CD4-positive, alpha-beta memory T cell (primary cell): ENCODE measurements at regions of chr2 and their contacts with region 1.

Region 1: DNA sequence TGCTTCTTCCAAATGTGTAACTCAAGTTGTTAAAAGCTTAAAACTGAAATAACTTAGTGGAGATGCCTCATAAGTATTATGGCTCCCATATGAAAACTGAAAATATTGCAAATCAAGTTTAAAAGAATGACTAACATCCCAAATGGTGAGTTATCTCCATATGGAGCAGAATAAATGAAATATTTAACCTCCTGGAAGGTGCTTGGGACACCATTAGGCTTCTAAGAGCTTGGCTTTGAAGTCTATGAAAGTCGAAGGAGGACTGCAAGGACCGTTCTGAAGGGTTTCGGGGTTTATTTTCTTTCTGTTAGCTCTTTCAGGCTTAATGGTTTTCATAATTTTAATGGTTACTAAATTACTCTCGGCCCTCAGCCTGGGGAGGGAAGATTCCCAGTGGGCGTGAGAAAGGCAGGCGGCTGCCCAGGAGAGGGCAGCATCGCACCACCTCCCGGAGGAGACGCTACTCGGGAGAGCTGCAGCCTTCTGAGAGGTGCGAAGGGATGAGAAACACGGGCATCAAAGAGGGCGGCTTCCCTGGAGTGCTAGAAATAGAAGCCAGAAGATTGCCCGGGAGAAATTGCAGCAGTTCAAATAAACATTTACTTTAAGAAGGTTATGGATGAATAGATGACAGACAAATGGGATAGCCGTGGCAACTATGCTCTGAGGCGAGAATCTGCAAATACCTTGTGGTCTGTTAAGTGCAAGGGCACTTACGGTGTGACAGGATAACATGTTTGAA is 43.1 kb downstream of the MAP3K19 start:
- DNase-seq: peak; percentile 48 to 67 (median 62)
- H3K4me3 ChIP-seq: no peak overlapping the region
- H3K4me3 Mint-ChIP-seq: peak overlapping the region in 3 of 8 donors; percentile 8 to 20 (median 17)
- H3K27ac ChIP-seq: no peak overlapping the region
- H3K27ac Mint-ChIP-seq: peak overlapping the region in 1 of 7 donors; percentile 52
- H3K4me1 ChIP-seq: no peaks in the 10 kb centered on the region
- H3K4me1 Mint-ChIP-seq: peaks cover 2 to 6% (median 5%) of the 10 kb centered on the region in 4 donors
- H3K27me3 ChIP-seq: no peaks in the 10 kb centered on the region
- H3K27me3 Mint-ChIP-seq: peaks cover 8 to 20% of the 10 kb centered on the region in 2 donors

Region 2: GRCh38 chr2:134988994-134989605 is 15.1 kb before region 1 on chr2:
- CTCF ChIA-PET with region 1: interaction called, 19 read pairs
- POLR2A ChIA-PET with region 1: no interaction called
- intact Hi-C with region 1: no loop called
- DNase-seq: peak in 4 of 5 donors; percentile 11 to 22 (median 14)
- H3K4me3 ChIP-seq: no peak overlapping the region
- H3K4me3 Mint-ChIP-seq: no peak overlapping the region
- H3K27ac ChIP-seq: no peak overlapping the region
- H3K27ac Mint-ChIP-seq: no peak overlapping the region
- H3K4me1 ChIP-seq: no peaks in the 10 kb centered on the region
- H3K4me1 Mint-ChIP-seq: no peaks in the 10 kb centered on the region
- H3K27me3 ChIP-seq: peaks cover 4% of the 10 kb centered on the region
- H3K27me3 Mint-ChIP-seq: peaks cover 0 to 5% of the 10 kb centered on the region in 2 donors

Region 3: DNA sequence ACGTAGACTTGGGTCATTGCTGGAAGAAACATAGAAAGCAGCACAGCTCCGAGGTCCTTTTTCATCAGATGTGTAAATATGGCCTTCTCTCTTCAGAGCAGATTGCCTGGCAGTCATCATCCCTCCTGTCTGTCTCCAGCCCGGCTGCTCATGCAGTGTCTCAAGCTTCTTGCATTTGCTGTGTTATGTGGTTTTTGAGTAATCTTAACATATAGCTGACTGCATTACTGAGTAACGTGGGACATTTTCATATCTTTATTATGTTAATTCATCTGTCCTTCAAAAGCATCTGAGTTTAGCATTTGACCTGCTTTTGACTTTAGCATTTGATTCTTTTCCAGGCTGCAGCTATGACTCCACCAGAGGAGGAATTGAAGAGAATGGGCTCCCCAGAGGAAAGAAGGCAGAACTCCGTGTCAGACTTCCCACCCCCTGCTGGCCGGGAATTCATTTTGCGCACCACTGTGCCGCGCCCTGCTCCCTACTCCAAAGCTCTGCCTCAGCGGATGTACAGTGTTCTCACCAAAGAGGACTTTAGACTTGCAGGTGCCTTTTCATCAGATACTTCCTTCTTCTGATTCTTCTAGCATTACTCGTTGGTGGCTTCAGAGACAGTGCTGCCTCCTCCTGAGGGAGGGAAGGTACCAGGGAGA is 164.2 kb after region 1 on chr2:
- CTCF ChIA-PET with region 1: interaction called, 8 read pairs
- POLR2A ChIA-PET with region 1: no interaction called
- intact Hi-C with region 1: loop called (anchors 5 kb)
- DNase-seq: no peak
- H3K4me3 ChIP-seq: no peak overlapping the region
- H3K4me3 Mint-ChIP-seq: no peak overlapping the region
- H3K27ac ChIP-seq: no peak overlapping the region
- H3K27ac Mint-ChIP-seq: peak overlapping the region in 2 of 7 donors; percentile 23 to 44
- H3K4me1 ChIP-seq: no peaks in the 10 kb centered on the region
- H3K4me1 Mint-ChIP-seq: peaks cover 0 to 12% (median 4%) of the 10 kb centered on the region in 4 donors
- H3K27me3 ChIP-seq: no peaks in the 10 kb centered on the region
- H3K27me3 Mint-ChIP-seq: no peaks in the 10 kb centered on the region

Region 4: GRCh38 chr2:135473567-135473966 is 469.4 kb after region 1 on chr2:
- CTCF ChIA-PET with region 1: interaction called, 4 read pairs
- POLR2A ChIA-PET with region 1: no interaction called
- intact Hi-C with region 1: loop called (anchors 2 kb)
- DNase-seq: peak in 4 of 5 donors; percentile 4 to 25 (median 10)
- H3K4me3 ChIP-seq: no peak overlapping the region
- H3K4me3 Mint-ChIP-seq: no peak overlapping the region
- H3K27ac ChIP-seq: no peak overlapping the region
- H3K27ac Mint-ChIP-seq: no peak overlapping the region
- H3K4me1 ChIP-seq: no peaks in the 10 kb centered on the region
- H3K4me1 Mint-ChIP-seq: no peaks in the 10 kb centered on the region
- H3K27me3 ChIP-seq: no peaks in the 10 kb centered on the region
- H3K27me3 Mint-ChIP-seq: no peaks in the 10 kb centered on the region

Region 5: DNA sequence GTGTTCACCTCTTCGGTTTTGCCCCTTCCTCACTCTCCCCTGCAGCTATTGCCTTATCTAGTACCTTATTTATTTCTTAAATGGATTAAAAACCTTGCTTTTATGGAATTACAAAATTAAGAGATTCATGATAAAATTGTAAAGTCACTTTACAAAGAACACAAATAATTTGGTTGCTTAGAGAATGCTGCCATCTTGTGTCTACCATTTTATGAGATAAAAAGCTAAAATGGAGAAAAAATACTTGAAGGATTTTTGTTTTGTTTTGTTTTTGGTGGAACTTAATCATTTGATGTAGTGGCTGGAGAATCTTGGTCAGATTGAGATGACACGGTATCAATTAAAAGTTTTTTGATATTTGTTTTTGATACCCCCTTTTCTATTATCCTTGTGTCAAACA is 596.7 kb after region 1 on chr2:
- CTCF ChIA-PET with region 1: interaction called, 33 read pairs
- POLR2A ChIA-PET with region 1: no interaction called
- intact Hi-C with region 1: loop called (anchors 1 kb)
- DNase-seq: peak in 2 of 5 donors; percentile 0 to 1
- H3K4me3 ChIP-seq: no peak overlapping the region
- H3K4me3 Mint-ChIP-seq: no peak overlapping the region
- H3K27ac ChIP-seq: no peak overlapping the region
- H3K27ac Mint-ChIP-seq: no peak overlapping the region
- H3K4me1 ChIP-seq: no peaks in the 10 kb centered on the region
- H3K4me1 Mint-ChIP-seq: peaks cover 0 to 5% (median 3%) of the 10 kb centered on the region in 4 donors
- H3K27me3 ChIP-seq: no peaks in the 10 kb centered on the region
- H3K27me3 Mint-ChIP-seq: no peaks in the 10 kb centered on the region

Region 6: GRCh38 chr2:135709992-135710391 is 705.8 kb after region 1 on chr2:
- CTCF ChIA-PET with region 1: interaction called, 157 read pairs
- POLR2A ChIA-PET with region 1: interaction called, 3 read pairs
- intact Hi-C with region 1: loop called (anchors 1 kb)
- DNase-seq: peak; percentile 57 to 68 (median 60)
- H3K4me3 ChIP-seq: no peak overlapping the region
- H3K4me3 Mint-ChIP-seq: no peak overlapping the region
- H3K27ac ChIP-seq: no peak overlapping the region
- H3K27ac Mint-ChIP-seq: no peak overlapping the region
- H3K4me1 ChIP-seq: no peaks in the 10 kb centered on the region
- H3K4me1 Mint-ChIP-seq: peaks cover 0 to 3% (median under 1%) of the 10 kb centered on the region in 4 donors
- H3K27me3 ChIP-seq: no peaks in the 10 kb centered on the region
- H3K27me3 Mint-ChIP-seq: no peaks in the 10 kb centered on the region